ENCODE measurements at regions of chr1 and their contacts with region 1.

Region 1: DNA sequence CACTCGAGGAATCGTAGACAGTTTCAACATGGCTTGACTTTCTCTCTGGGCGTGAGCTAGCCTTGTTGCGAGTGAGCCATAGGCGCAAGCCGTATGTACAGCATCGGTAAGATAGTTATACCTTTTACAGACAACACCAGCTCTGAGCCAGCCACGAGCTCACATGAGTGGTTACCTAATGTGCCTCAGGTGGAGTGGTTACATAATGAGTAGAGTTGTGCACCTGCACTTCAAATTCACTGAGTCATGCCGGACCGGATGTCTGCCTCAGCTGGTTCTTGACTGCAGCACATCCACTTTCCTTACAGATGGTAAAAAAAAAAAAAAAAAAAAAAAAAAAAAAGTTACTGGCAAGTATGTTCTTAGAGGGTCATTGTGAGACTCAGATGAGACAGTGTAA is 360.4 kb upstream of the NR5A2 start:
- DNase-seq: no peak
- H3K27ac ChIP-seq: no peak overlapping the region
- CTCF ChIP-seq: no peak

Region 2: DNA sequence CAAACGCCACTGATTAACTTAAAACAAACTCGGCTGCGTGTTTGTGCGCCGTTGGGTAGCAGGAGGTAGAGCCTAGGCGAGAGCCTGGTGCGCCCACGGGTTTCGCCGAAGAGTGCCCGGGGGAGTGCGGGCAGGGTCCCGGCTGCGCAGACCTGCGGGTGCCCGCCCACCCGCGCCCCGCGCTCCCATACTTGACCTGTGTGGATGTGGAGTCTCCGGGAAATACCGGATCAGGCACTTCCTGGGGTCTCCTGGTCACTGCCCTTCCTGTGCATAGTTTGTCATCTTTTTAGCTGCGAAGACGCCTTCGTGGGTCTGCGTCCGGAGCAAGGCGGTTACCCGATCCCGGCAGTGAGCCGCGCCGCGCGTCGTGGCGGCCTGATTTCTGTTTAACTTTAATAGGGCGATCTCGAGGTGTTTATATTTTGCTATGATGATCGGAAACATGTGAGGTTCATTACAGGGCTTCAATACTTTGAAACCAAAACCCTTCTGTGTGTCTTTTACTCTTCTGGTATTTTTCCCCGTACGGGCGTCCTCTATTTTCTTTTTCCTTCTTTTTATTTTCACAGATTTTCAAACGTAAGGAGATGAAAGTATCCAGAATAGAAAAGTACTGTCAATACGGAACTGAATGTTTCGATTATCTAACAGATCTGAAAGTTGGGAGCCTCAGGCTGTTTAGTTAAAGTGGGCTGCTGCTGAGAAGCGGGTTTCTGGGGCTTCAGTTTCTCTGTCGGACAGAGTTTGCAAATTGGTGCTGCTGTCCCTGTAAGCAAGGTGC is 375.7 kb after region 1 on chr1:
- CTCF ChIA-PET with region 1: no interaction called
- POLR2A ChIA-PET with region 1: interaction called, 10 read pairs
- DNase-seq: no peak
- H3K27ac ChIP-seq: no peak overlapping the region
- CTCF ChIP-seq: no peak

Measured in RWPE1 (cell line).